ENCODE measurements at regions of chr7 and their contacts with region 1.

Region 1: GRCh38 chr7:122528879-122529481 is 169.9 kb downstream of the RNF133 start:
- DNase-seq: peak; percentile 24 to 45 (median 33)
- ATAC-seq: 0 out of 3 replicates have a peak, but pooled peaks have one; percentile 36
- H3K4me3 ChIP-seq: no peak overlapping the region
- H3K27ac ChIP-seq: no peak overlapping the region
- H3K4me1 ChIP-seq: no peaks in the 10 kb centered on the region
- H3K27me3 ChIP-seq: no peaks in the 10 kb centered on the region
- CTCF ChIP-seq: peak in 2 of 3 experiments; percentile 7 to 55; a peak in 3 of 6 replicates
- EP300 ChIP-seq: no peak
- POLR2A ChIP-seq: no peak
- RAD21 ChIP-seq: peak; percentile 48 to 59

Region 2: GRCh38 chr7:122092964-122093797 is 435.8 kb before region 1 on chr7:
- CTCF ChIA-PET with region 1: no interaction called
- POLR2A ChIA-PET with region 1: no interaction called
- in situ Hi-C with region 1: no loop called
- intact Hi-C with region 1: loop called (anchors 1 kb)
- DNase-seq: peak; percentile 28 to 64 (median 40)
- ATAC-seq: peak; percentile 59; the same call in 1 of the 3 replicates
- H3K4me3 ChIP-seq: no peak overlapping the region
- H3K27ac ChIP-seq: no peak overlapping the region
- H3K4me1 ChIP-seq: no peaks in the 10 kb centered on the region
- H3K27me3 ChIP-seq: no peaks in the 10 kb centered on the region
- CTCF ChIP-seq: peak; percentile 39 to 66 (median 66); a peak in 5 of 6 replicates
- EP300 ChIP-seq: no peak
- POLR2A ChIP-seq: no peak
- RAD21 ChIP-seq: peak; percentile 51 to 68

Region 3: DNA sequence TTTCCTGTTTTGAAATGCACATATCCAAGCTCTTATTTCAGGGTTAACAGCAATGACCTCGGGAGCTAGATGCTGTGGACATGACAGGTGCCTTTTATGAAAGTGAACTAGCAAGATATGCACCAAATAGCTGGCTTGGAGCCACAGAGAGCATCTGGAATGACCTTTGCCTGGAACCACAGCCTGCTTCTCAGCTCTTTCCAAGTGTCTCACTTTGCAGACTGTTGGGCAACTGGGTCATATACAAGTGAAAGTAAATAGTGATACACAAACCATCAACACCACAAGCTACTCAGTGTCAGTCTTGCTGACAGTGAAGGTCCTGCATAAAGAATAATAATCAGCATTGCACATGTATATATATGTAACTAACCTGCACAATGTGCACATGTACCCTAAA is 13.6 kb before region 1 on chr7:
- CTCF ChIA-PET with region 1: no interaction called
- POLR2A ChIA-PET with region 1: no interaction called
- in situ Hi-C with region 1: no loop called
- intact Hi-C with region 1: no loop called
- DNase-seq: no peak
- ATAC-seq: no peak
- H3K4me3 ChIP-seq: no peak overlapping the region
- H3K27ac ChIP-seq: no peak overlapping the region
- H3K4me1 ChIP-seq: no peaks in the 10 kb centered on the region
- H3K27me3 ChIP-seq: no peaks in the 10 kb centered on the region
- CTCF ChIP-seq: no peak
- EP300 ChIP-seq: no peak
- POLR2A ChIP-seq: no peak
- RAD21 ChIP-seq: no peak